Activated CD4-positive, alpha-beta memory T cell treated with anti-CD3 and anti-CD28 coated beads, Interleukin-2, amount 10 ng/mL, durations not matched to agents 7 days and 5 days (primary cell): ENCODE measurements at regions of chr20 and their contacts with region 1.

Region 1: GRCh38 chr20:31547017-31547675 is 32.9 kb downstream of the HM13 start:
- DNase-seq: peak; percentile 85
- H3K4me3 Mint-ChIP-seq: peak overlapping the region; percentile 93
- H3K27ac Mint-ChIP-seq: peak overlapping the region; percentile 96
- H3K4me1 Mint-ChIP-seq: peaks cover 44% of the 10 kb centered on the region
- H3K27me3 Mint-ChIP-seq: no peaks in the 10 kb centered on the region

Region 2: DNA sequence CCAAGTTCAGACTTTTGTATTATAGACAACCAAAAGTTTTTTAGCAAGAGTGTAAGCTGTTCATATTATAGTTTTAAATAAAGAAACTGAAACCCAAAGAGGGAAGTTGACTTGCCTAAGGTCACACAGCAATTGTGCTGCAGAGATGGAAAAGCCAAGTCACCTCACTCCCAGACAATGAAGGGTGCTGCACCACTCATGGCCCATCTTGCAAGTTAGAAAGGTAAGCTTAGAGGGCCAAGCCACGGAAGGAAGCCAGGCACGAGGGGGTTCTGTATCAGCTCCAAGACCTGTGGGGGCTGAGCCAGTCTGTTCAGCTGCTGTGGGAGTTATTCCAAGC is 73.1 kb before region 1 on chr20:
- CTCF ChIA-PET with region 1: no interaction called
- POLR2A ChIA-PET with region 1: no interaction called
- DNase-seq: no peak
- H3K4me3 Mint-ChIP-seq: no peak overlapping the region
- H3K27ac Mint-ChIP-seq: no peak overlapping the region
- H3K4me1 Mint-ChIP-seq: no peaks in the 10 kb centered on the region
- H3K27me3 Mint-ChIP-seq: peaks cover 27% of the 10 kb centered on the region

Region 3: DNA sequence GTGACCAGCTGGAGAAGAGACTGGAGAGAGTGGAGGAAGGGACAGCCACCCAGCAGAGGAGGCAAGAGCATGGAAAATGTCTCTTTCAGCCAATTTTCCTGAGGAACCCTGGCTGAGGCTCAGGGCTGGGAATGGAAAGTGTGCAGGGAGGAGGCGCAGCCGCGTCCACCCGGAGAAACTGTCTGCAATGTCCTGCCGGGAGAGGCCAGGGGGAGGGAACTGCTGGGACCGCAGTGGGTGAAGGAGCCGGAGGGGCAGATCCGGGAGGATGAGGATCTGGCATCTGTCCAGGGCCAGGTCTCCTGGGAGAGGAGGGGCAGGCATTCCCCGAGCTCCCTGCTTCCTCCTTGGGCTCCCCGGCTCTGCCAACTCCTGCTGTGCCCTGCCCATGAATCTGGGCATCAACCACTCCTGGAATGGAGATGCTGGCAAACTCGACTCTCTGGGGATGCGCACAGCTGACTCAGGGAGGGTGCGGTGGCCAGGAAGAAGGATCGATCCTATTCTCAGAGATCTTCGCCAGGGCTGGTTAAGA is 50.3 kb before region 1 on chr20:
- CTCF ChIA-PET with region 1: no interaction called
- POLR2A ChIA-PET with region 1: no interaction called
- DNase-seq: no peak
- H3K4me3 Mint-ChIP-seq: no peak overlapping the region
- H3K27ac Mint-ChIP-seq: no peak overlapping the region
- H3K4me1 Mint-ChIP-seq: no peaks in the 10 kb centered on the region
- H3K27me3 Mint-ChIP-seq: peaks cover 16% of the 10 kb centered on the region

Region 4: DNA sequence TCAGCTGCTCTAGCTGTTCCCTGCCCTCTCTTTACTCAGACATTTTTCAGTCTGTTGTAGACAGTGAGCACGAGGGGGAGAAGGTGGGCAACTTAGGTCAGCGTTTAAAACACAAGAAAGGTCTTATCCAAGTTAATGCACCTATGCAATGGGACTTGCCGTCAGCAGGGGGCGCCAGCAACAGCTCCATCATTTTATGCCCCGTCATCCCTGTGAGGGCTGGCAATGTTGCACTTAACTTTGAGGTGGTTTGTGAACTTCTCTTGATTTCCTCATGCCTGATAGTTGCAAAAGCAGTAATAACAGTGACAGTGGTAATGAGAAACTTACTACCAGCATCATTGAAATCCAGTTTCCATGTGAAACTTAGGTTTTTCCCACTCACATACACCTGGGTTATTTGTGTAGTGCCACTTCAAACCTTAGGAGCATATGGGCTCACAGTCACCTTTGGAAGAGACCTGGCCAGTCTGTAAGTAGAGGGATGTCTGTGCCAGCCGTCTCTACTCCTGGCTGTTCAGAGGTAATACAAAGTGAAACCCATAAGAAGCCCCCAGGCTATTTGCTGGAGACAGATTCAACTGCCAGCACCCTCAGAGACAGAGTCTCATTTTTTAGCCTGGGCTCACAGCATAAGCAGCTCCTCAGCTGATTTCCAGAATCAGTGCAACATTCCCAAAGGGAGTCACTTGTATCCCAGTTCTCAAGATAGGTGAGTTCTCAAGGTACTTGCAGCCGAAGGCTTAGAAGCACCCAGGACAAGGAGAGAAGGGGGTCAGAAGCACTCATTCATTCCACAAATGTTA is 13.2 kb after region 1 on chr20:
- CTCF ChIA-PET with region 1: interaction called, 103 read pairs
- POLR2A ChIA-PET with region 1: interaction called, 3 read pairs
- DNase-seq: peak; percentile 81
- H3K4me3 Mint-ChIP-seq: no peak overlapping the region
- H3K27ac Mint-ChIP-seq: peak overlapping the region; percentile 68
- H3K4me1 Mint-ChIP-seq: peaks cover 19% of the 10 kb centered on the region
- H3K27me3 Mint-ChIP-seq: no peaks in the 10 kb centered on the region

Region 5: GRCh38 chr20:31605031-31605901 is 58.1 kb after region 1 on chr20 and contains the start of gene ID1:
- CTCF ChIA-PET with region 1: interaction called, 523 read pairs
- POLR2A ChIA-PET with region 1: interaction called, 4 read pairs
- DNase-seq: peak; percentile 91
- H3K4me3 Mint-ChIP-seq: peak within 1 kb of the TSS; percentile 88
- H3K27ac Mint-ChIP-seq: peak within 1 kb of the TSS; percentile 29
- H3K4me1 Mint-ChIP-seq: peaks cover 33% of the 10 kb centered on the region
- H3K27me3 Mint-ChIP-seq: peaks cover 52% of the 10 kb centered on the region
- total RNA-seq, gene ID1: 0.48 to 0.58 TPM